Activated CD4-positive, alpha-beta memory T cell treated with anti-CD3 and anti-CD28 coated beads for 36 hours (primary cell): ENCODE measurements at regions of chr16 and their contacts with region 1.

Region 1: GRCh38 chr16:70523076-70523742 is at the start of gene COG4:
- DNase-seq: peak; percentile 95
- H3K4me3 Mint-ChIP-seq: peak within 1 kb of the TSS; percentile 91
- H3K27ac Mint-ChIP-seq: peak within 1 kb of the TSS; percentile 98
- H3K4me1 Mint-ChIP-seq: peaks cover 48% of the 10 kb centered on the region
- H3K27me3 Mint-ChIP-seq: no peaks in the 10 kb centered on the region
- total RNA-seq, gene COG4: 35.9 to 40.2 TPM

Region 2: GRCh38 chr16:70251629-70252354 is 271.4 kb before region 1 on chr16 and contains the start of gene EXOSC6:
- CTCF ChIA-PET with region 1: interaction called, 7 read pairs
- POLR2A ChIA-PET with region 1: interaction called, 7 read pairs
- intact Hi-C with region 1: loop called (anchors 1 kb)
- DNase-seq: peak; percentile 96
- H3K4me3 Mint-ChIP-seq: peak within 1 kb of the TSS; percentile 84
- H3K27ac Mint-ChIP-seq: peak within 1 kb of the TSS; percentile 94
- H3K4me1 Mint-ChIP-seq: peaks cover 19% of the 10 kb centered on the region
- H3K27me3 Mint-ChIP-seq: no peaks in the 10 kb centered on the region
- total RNA-seq, gene EXOSC6: 22.3 to 24.5 TPM

Region 3: DNA sequence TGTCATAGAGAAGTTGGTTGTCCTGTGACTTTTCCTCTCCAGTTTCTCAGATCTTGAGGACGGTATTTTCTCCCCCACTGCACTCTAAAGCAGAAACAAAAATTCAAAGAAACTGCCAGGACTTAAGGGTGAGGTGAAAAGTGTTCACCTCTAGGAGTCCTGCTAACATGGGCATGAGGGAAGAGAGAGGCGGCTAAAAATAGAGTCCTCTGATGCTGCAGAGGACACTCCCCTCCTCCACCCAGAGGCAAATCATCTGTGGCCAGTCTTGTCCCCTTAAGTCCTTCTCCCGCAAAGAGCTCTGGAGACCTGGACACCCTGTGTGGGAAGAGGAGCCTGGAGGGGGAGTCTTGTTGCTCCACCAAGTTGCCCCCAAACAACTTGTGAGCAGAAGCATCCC is 181.2 kb before region 1 on chr16:
- CTCF ChIA-PET with region 1: interaction called, 5 read pairs
- POLR2A ChIA-PET with region 1: interaction called, 8 read pairs
- intact Hi-C with region 1: loop called (anchors 2 kb)
- DNase-seq: no peak
- H3K4me3 Mint-ChIP-seq: no peak overlapping the region
- H3K27ac Mint-ChIP-seq: peak overlapping the region; percentile 11
- H3K4me1 Mint-ChIP-seq: peaks cover 7% of the 10 kb centered on the region
- H3K27me3 Mint-ChIP-seq: no peaks in the 10 kb centered on the region

Region 4: DNA sequence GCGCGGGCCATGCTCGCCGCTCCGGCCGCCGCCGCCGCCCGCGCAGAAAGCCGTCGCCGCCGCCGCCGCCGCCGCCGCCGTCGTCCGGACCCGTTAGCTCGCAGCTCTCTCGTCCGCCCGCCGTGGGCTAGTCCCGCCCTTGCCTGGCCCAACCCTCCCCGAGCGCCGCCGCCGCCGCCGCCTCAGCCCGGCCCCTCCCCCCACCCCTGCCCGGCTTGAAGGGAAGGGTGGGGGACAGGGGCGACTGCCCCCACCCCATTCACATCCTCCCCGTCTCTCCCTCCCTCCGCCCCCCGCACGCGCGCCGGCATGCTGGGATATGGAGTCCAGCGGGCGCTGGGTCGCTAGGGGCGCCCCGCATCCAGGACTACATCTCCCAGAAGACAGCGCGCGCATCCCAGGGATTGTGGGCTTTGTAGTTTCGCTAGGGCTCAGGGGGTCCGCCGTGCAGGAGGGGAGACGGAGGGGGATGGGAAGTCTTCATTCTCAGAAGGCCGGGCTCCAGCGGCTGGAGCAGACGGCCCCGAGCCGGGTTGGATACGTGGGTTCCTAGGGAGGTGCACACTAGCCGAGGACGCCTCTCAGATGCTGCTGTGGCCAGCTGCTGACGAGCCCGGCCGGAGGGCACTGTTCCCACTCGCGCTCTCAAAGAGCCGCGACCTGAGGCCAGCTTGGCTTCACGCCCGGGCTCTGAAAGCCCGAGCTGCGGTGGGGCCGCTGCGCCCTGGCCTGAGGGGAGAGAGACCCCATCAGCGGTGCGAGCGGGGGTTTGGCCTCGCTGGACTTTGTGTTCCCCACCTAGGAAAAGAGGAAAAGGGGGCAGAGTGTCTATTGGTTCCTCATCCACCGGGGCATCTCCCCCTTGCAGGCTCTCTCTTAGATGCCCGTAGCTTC is 84.0 kb before region 1 on chr16 and contains the start of gene ST3GAL2:
- CTCF ChIA-PET with region 1: no interaction called
- POLR2A ChIA-PET with region 1: interaction called, 3 read pairs
- intact Hi-C with region 1: loop called (anchors 1 kb)
- DNase-seq: peak; percentile 96
- H3K4me3 Mint-ChIP-seq: peak within 1 kb of the TSS; percentile 94
- H3K27ac Mint-ChIP-seq: peak within 1 kb of the TSS; percentile 76
- H3K4me1 Mint-ChIP-seq: peaks cover 31% of the 10 kb centered on the region
- H3K27me3 Mint-ChIP-seq: no peaks in the 10 kb centered on the region
- total RNA-seq, gene ST3GAL2: 16.7 to 17.3 TPM

Region 5: DNA sequence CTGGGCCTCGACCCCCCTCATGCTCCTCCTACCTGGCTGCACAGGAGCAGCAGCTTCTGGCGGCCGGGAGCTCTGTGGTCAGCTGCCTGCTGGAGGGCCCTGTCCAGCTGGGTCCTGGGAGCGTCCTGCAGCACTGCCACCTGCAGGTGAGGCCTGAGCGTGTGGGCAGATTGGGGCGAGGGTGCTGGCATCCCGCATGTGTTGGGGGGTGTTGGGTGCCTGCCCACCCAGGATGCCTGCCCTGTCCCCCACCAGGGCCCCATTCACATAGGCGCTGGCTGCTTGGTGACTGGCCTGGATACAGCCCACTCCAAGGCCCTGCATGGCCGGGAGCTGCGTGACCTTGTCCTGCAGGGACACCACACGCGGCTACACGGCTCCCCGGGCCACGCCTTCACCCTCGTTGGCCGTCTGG is 52.3 kb before region 1 on chr16:
- CTCF ChIA-PET with region 1: no interaction called
- POLR2A ChIA-PET with region 1: interaction called, 3 read pairs
- intact Hi-C with region 1: loop called (anchors 1 kb)
- DNase-seq: no peak
- H3K4me3 Mint-ChIP-seq: no peak overlapping the region
- H3K27ac Mint-ChIP-seq: no peak overlapping the region
- H3K4me1 Mint-ChIP-seq: peaks cover 4% of the 10 kb centered on the region
- H3K27me3 Mint-ChIP-seq: no peaks in the 10 kb centered on the region